CD8-positive, alpha-beta memory T cell (primary cell): ENCODE measurements at regions of chr14 and their contacts with region 1.

Region 1: DNA sequence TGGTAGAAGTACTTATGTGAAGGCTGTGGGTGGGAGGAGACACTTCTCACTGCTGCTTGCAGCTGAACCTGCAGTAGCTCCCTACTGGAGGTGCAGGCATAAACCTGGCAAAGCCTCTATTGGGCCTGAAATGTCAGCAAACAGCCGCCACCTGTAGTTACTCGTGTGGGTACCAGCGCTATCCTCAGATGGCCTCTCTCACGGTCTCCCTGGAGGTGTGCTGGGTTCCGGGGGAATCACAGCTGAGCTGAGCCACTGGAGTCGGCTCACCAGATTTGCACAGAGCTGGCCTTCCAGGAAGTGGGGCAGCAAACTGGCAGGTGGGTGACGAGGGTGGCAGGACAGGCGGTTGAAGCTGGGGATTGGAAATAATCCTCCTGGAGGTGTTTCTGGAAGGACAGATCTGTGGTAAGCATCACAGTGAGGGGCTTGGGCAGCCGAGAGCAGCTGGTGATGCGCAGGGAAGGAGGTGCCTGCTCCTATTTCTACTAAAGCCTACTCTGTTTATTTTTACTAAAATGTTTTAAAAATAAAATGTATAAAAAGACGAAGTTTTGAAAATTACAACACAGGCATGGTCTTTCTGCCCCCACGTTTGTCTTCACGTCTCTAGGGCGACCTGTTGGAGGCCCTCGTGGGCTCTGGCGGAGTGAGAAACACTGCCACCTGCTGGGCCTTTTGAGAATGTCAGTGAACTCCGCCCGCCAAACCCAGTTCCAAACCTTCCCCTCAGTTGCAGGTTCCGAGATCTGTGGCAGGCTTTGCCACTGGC is 67.8 kb upstream of the PLEKHG3 start:
- DNase-seq: peak; percentile 52 to 75 (median 56)
- H3K4me3 ChIP-seq: no peak overlapping the region
- H3K4me3 Mint-ChIP-seq: no peak overlapping the region
- H3K27ac ChIP-seq: no peak overlapping the region
- H3K27ac Mint-ChIP-seq: no peak overlapping the region
- H3K4me1 ChIP-seq: no peaks in the 10 kb centered on the region
- H3K4me1 Mint-ChIP-seq: peaks cover 2 to 5% (median 4%) of the 10 kb centered on the region in 3 donors
- H3K27me3 ChIP-seq: no peaks in the 10 kb centered on the region
- H3K27me3 Mint-ChIP-seq: peaks cover 7 to 16% of the 10 kb centered on the region in 2 donors

Region 2: DNA sequence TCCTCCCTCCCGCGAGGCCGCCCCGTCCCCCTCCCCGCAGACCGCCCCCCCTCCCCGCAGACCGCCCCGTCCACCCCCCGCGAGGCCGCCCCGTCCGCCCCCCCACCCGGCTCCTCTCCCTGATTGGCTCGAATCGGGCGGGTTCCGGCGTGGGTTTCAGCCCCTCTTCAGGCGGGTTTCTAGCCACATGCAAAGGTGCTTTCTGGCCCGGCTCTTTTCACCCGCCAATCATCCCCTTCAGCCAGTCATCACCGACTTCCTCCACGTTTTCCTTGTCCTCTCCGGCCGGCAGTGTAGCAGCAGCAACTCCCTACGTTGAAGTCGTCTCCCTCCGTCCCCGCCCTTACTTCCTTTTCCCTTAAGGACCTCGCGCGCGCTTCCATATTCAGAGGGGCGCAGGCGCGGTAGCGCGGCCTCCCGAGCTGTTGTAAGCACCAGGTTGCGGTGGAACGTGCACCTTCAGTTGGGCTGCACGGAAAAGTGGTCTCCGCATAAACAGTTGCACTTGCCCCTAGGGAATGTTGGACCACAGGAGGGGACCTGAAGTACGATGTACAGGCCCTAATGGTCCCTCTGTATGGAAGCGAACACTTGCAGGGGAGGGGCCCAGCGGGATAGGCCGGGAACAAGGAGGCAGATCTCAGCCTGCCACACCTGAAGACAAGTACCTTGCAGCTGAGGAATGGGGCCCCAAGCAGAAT is 297.6 kb before region 1 on chr14:
- CTCF ChIA-PET with region 1: interaction called, 23 read pairs
- POLR2A ChIA-PET with region 1: no interaction called
- DNase-seq: peak; percentile 74 to 89 (median 83)
- H3K4me3 ChIP-seq: peak overlapping the region; percentile 85
- H3K4me3 Mint-ChIP-seq: peak overlapping the region; percentile 88 to 99 (median 91)
- H3K27ac ChIP-seq: peak overlapping the region; percentile 36
- H3K27ac Mint-ChIP-seq: peak overlapping the region; percentile 62 to 95 (median 91)
- H3K4me1 ChIP-seq: peaks cover 14% of the 10 kb centered on the region
- H3K4me1 Mint-ChIP-seq: peaks cover 16 to 22% (median 21%) of the 10 kb centered on the region in 3 donors
- H3K27me3 ChIP-seq: no peaks in the 10 kb centered on the region
- H3K27me3 Mint-ChIP-seq: peaks cover 0 to 3% of the 10 kb centered on the region in 2 donors

Region 3: GRCh38 chr14:64540208-64541157 is 95.9 kb before region 1 on chr14 and contains the start of gene HSPA2:
- CTCF ChIA-PET with region 1: interaction called, 14 read pairs
- POLR2A ChIA-PET with region 1: no interaction called
- DNase-seq: peak; percentile 89 to 94 (median 90)
- H3K4me3 ChIP-seq: peak within 1 kb of the TSS; percentile 92
- H3K4me3 Mint-ChIP-seq: peak within 1 kb of the TSS; percentile 92 to 99 (median 95)
- H3K27ac ChIP-seq: no peak within 1 kb of the TSS
- H3K27ac Mint-ChIP-seq: peak within 1 kb of the TSS; percentile 59 to 94 (median 87)
- H3K4me1 ChIP-seq: peaks cover 18% of the 10 kb centered on the region
- H3K4me1 Mint-ChIP-seq: peaks cover 26 to 39% (median 37%) of the 10 kb centered on the region in 3 donors
- H3K27me3 ChIP-seq: no peaks in the 10 kb centered on the region
- H3K27me3 Mint-ChIP-seq: peaks cover 0 to 6% of the 10 kb centered on the region in 2 donors
- total RNA-seq, gene HSPA2: 1.9 TPM

Region 4: DNA sequence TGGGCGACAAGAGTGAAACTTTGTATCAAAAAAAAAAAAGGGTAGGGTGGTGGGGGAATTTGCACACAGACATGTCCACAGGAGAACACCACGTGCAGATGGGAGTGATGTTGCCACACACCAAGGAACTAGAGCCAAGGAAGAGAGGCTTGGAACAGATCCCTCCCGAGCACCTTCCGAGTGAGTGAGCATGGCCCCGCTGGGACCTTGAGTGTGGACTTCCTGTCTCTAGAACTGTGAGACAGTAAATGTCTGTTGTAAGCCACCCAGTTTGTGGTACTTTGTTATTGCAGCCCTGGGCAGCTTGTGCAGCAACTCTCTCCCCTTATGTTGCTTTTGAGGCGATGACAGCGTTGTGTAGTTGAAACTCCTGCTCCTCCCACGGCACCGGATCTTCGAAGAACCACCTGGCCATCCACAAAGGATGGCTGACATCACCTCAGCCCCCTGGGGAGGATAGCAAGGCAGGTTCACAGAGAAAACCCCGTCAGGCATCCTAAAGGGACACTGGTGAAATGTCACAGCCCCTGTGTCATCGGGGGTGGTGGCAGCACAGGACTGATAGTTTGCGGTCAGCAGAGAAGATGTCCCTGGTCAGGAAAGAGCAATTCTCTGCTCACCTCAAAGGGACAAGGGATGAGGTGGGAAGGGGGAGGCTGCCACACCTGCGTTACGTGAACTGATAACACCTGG is 13.1 kb after region 1 on chr14:
- CTCF ChIA-PET with region 1: interaction called, 10 read pairs
- POLR2A ChIA-PET with region 1: no interaction called
- DNase-seq: no peak
- H3K4me3 ChIP-seq: no peak overlapping the region
- H3K4me3 Mint-ChIP-seq: no peak overlapping the region
- H3K27ac ChIP-seq: no peak overlapping the region
- H3K27ac Mint-ChIP-seq: no peak overlapping the region
- H3K4me1 ChIP-seq: no peaks in the 10 kb centered on the region
- H3K4me1 Mint-ChIP-seq: no peaks in the 10 kb centered on the region
- H3K27me3 ChIP-seq: no peaks in the 10 kb centered on the region
- H3K27me3 Mint-ChIP-seq: peaks cover 26 to 30% of the 10 kb centered on the region in 2 donors

Region 5: DNA sequence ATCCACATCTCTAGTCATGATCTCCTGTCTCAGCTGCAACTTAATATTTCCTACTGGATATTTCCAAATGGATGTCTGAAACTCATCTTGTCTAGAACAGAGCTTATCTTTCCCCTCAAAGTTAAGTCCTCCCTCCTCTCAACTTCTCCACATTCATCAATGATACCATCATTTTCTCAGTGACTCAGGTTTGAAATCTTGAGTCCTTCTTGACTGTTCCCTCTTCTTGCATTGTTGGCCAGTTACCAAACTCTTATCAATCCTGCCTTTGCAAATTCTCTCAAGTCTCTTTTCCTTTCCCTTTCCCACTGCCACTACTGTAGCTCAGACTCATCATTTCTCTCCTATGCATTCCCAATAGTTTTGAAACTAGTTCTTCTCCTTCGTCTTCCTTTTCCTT is 263.6 kb after region 1 on chr14:
- CTCF ChIA-PET with region 1: no interaction called
- POLR2A ChIA-PET with region 1: no interaction called
- DNase-seq: no peak
- H3K4me3 ChIP-seq: no peak overlapping the region
- H3K4me3 Mint-ChIP-seq: no peak overlapping the region
- H3K27ac ChIP-seq: no peak overlapping the region
- H3K27ac Mint-ChIP-seq: no peak overlapping the region
- H3K4me1 ChIP-seq: no peaks in the 10 kb centered on the region
- H3K4me1 Mint-ChIP-seq: no peaks in the 10 kb centered on the region
- H3K27me3 ChIP-seq: no peaks in the 10 kb centered on the region
- H3K27me3 Mint-ChIP-seq: peaks cover 5 to 23% of the 10 kb centered on the region in 2 donors